HEK293 (cell line): ENCODE measurements at regions of chr6 and their contacts with region 1.

Region 1: DNA sequence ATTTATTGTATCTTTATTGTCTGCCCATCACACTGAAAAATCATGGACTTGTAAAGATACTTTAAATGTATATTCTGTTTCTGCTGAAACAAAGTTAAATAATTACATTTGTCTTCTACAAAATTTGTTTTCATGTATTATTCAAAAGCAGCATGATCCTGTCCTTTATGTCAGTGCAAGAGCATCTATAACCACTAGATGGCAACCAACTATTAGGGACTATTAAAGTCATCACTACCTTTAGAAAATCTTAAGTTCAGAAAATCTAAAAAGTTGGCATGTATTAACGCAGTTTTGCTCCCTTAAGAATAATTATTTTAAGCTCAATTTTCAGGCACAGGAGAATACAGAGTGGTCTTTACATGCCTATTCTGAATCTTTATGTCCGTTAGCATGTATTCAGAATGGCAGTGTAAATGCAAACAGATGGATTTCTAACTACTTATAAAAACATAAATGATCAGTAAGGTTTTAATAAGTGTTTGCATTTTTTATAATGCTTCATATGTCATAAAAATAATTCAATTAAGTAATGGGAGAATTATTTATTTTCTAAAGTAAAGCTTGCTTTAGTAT is 17.8 kb downstream of the TMEM30A start:
- H3K4me3 ChIP-seq: no peak overlapping the region
- H3K27ac ChIP-seq: no peak overlapping the region
- H3K4me1 ChIP-seq: peaks cover 14% of the 10 kb centered on the region
- CTCF ChIP-seq: no peak; the same call in 1 of the 2 replicates

Region 2: GRCh38 chr6:75220357-75220756 is 46.4 kb before region 1 on chr6:
- CTCF ChIA-PET with region 1: no interaction called
- POLR2A ChIA-PET with region 1: no interaction called
- H3K4me3 ChIP-seq: no peak overlapping the region
- H3K27ac ChIP-seq: no peak overlapping the region
- H3K4me1 ChIP-seq: peaks cover 12% of the 10 kb centered on the region
- CTCF ChIP-seq: no peak

Region 3: DNA sequence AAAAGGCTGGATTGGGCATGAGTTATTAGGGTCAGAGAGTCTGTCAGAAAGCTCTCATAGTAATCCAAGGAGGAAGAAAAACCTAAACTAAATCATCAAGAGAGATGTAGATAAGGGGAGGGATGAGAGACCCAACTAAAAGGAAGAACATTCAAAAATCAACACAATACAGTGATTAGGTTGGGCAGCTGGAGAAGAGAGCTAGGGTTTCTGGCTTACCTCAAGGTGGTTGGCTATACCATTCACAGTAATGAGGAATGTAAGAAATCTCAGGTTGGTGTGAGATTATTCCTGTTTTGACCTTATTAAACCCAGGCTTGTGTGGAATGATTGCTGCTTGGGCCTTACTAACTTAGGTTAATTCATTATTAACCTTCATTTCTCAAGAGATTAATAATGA is 17.0 kb before region 1 on chr6:
- CTCF ChIA-PET with region 1: interaction called, 55 read pairs
- POLR2A ChIA-PET with region 1: interaction called, 3 read pairs
- H3K4me3 ChIP-seq: no peak overlapping the region
- H3K27ac ChIP-seq: no peak overlapping the region
- H3K4me1 ChIP-seq: no peaks in the 10 kb centered on the region
- CTCF ChIP-seq: no peak

Region 4: DNA sequence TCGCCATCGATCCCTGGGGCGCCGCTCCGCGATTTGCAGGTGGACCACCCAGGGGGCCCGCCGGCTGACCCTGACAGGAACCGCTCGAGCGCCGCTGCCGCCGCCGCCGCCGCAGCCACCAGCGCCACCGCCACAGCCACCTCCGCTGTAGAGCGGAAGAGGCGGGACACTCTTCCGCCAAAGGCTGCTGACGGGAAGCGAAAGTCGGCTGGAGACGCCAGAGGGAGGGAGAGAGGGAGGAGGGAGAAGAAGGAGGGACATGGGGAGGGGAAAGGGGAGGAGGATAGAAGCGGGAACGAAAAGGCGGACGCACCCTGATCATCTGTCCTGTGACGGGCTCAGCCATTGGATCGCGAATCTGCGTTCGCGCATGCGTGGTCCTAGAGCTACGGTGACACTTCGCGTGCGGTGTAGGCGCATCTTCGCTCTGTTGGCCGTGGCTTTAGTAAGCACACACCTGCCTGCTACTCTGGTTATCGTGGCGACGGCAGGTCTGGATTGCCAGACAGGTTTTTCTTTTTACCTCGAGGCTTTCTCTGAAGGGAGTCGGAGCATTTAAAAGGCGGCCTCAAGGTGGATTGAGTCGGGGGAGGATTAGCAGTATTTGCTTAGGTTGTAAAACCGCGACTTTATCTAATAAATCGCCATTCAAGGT is 18.0 kb after region 1 on chr6 and contains the start of gene TMEM30A:
- CTCF ChIA-PET with region 1: interaction called, 38 read pairs
- POLR2A ChIA-PET with region 1: interaction called, 6 read pairs
- H3K4me3 ChIP-seq: peak within 1 kb of the TSS; percentile 97
- H3K27ac ChIP-seq: peak within 1 kb of the TSS; percentile 64
- H3K4me1 ChIP-seq: peaks cover 6% of the 10 kb centered on the region; the same call in 1 of the 2 replicates
- CTCF ChIP-seq: peak; percentile 66

Region 5: DNA sequence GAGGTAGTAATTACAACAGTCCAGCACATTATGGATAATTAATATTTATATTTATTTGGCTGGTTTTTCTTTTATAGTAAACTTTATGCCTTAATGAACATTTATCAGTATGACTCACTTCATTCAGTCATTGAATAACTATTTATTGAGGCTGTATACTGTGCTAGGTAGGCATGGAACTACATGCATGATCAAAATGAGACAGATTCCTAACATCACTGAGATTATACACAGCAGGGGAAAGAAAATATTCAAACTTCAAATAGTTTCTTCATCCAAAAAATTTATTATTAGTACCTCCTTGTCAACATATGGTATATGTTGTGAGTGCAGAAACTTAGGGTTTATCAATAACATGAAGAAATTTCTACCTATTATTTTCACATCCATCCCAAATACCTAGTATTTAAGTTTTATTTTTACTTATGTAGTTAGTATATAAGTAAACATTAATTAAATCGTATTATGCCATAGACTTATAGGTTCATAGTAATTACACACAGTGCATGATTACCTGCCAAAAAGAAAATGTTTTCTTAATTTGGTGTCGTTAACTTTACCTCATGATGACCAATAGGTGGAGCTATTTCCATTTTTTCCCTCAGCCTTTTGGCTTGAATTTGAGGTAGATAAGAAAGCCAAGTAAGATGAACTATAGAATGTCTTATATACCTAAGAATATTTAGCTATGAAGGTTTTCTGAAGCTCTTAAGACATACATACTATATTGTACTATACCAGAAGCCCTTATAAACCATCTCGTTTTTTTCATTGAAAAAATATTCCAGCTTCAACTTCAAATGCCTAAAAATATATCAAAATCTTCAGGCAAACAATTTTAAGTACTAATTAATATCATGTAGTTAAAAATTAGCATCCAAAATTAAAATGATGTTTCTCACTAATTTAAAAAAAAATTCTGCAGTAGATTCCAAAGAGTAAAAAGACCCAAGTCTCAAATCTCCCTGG is 30.3 kb after region 1 on chr6:
- CTCF ChIA-PET with region 1: interaction called, 16 read pairs
- POLR2A ChIA-PET with region 1: no interaction called
- H3K4me3 ChIP-seq: no peak overlapping the region
- H3K27ac ChIP-seq: no peak overlapping the region
- H3K4me1 ChIP-seq: no peaks in the 10 kb centered on the region
- CTCF ChIP-seq: peak; percentile 47; the same call in 1 of the 2 replicates

Region 6: GRCh38 chr6:75504465-75505228 is 237.8 kb after region 1 on chr6:
- CTCF ChIA-PET with region 1: interaction called, 13 read pairs
- POLR2A ChIA-PET with region 1: no interaction called
- H3K4me3 ChIP-seq: no peak overlapping the region
- H3K27ac ChIP-seq: no peak overlapping the region
- H3K4me1 ChIP-seq: no peaks in the 10 kb centered on the region
- CTCF ChIP-seq: peak; percentile 59

Region 7: DNA sequence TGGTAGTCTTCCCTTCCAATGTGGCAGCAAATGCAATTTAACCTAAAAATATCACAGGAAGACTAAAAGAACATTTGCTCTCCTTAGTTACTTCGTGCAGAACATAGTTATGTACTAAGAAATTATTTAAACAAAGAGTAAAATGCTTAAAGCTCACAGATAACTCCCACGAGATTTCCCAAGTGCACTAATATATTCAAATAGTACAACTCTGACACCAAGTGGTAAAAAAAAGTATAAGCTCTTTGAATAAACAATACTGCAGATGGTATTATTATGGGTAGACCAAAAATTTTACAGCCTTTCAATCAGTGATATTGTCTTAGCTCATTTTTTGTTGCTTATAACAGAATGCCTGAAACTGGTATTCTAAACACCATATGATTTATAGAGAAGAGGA is 279.6 kb after region 1 on chr6:
- CTCF ChIA-PET with region 1: interaction called, 20 read pairs
- POLR2A ChIA-PET with region 1: no interaction called
- H3K4me3 ChIP-seq: no peak overlapping the region
- H3K27ac ChIP-seq: no peak overlapping the region
- H3K4me1 ChIP-seq: no peaks in the 10 kb centered on the region
- CTCF ChIP-seq: no peak